A549 (cell line): ENCODE measurements at regions of chr1 and their contacts with region 1.

Region 1: GRCh38 chr1:205430696-205431305 is 8.9 kb upstream of the LEMD1 start:
- DNase-seq: peak; percentile 44 to 60
- ATAC-seq: peak; percentile 79 to 88
- H3K4me3 ChIP-seq: peak overlapping the region; percentile 48
- H3K27ac ChIP-seq: peak overlapping the region; percentile 72 to 80
- H3K4me1 ChIP-seq: 0 out of 3 replicates have a peak, but pooled peaks cover 2% of the 10 kb centered on the region
- CTCF ChIP-seq: peak; percentile 99
- EP300 ChIP-seq: no peak
- POLR2A ChIP-seq: no peak
- RAD21 ChIP-seq: peak; percentile 79 to 88

Region 2: GRCh38 chr1:205032508-205032907 is 398.3 kb before region 1 on chr1:
- CTCF ChIA-PET with region 1: no interaction called
- POLR2A ChIA-PET with region 1: no interaction called
- DNase-seq: no peak
- ATAC-seq: no peak
- H3K4me3 ChIP-seq: no peak overlapping the region
- H3K27ac ChIP-seq: no peak overlapping the region
- H3K4me1 ChIP-seq: no peaks in the 10 kb centered on the region
- CTCF ChIP-seq: no peak
- EP300 ChIP-seq: no peak
- POLR2A ChIP-seq: no peak
- RAD21 ChIP-seq: no peak

Region 3: GRCh38 chr1:205321164-205321958 is 109.4 kb before region 1 on chr1 and contains the start of gene NUAK2:
- CTCF ChIA-PET with region 1: interaction called, 26 read pairs
- POLR2A ChIA-PET with region 1: no interaction called
- DNase-seq: peak; percentile 92 to 95
- ATAC-seq: peak; percentile 70 to 85
- H3K4me3 ChIP-seq: peak within 1 kb of the TSS; percentile 95
- H3K27ac ChIP-seq: peak within 1 kb of the TSS; percentile 96 to 99
- H3K4me1 ChIP-seq: peaks cover 41% of the 10 kb centered on the region
- CTCF ChIP-seq: no peak; the same call in 2 of the 3 replicates
- EP300 ChIP-seq: no peak
- POLR2A ChIP-seq: peak; percentile 99
- RAD21 ChIP-seq: peak; percentile 6 to 9; a peak in 2 of 5 replicates
- polyA plus RNA-seq, gene NUAK2: 22.6 and 29.7 TPM in 2 replicates

Region 4: GRCh38 chr1:205344066-205344928 is 86.5 kb before region 1 on chr1:
- CTCF ChIA-PET with region 1: interaction called, 34 read pairs
- POLR2A ChIA-PET with region 1: no interaction called
- DNase-seq: no peak
- ATAC-seq: peak; percentile 41 to 65
- H3K4me3 ChIP-seq: peak overlapping the region; percentile 66
- H3K27ac ChIP-seq: peak overlapping the region; percentile 64 to 86; a peak in 5 of 6 replicates
- H3K4me1 ChIP-seq: peaks cover 14% of the 10 kb centered on the region; the same call in 2 of the 3 replicates
- CTCF ChIP-seq: no peak
- EP300 ChIP-seq: no peak
- POLR2A ChIP-seq: no peak
- RAD21 ChIP-seq: no peak

Region 5: GRCh38 chr1:205396967-205397616 is 33.7 kb before region 1 on chr1:
- CTCF ChIA-PET with region 1: interaction called, 12 read pairs
- POLR2A ChIA-PET with region 1: no interaction called
- DNase-seq: peak; percentile 61 to 67
- ATAC-seq: peak; percentile 68 to 85; a peak in 5 of 6 replicates
- H3K4me3 ChIP-seq: no peak overlapping the region
- H3K27ac ChIP-seq: no peak overlapping the region
- H3K4me1 ChIP-seq: no peaks in the 10 kb centered on the region
- CTCF ChIP-seq: peak; percentile 71
- EP300 ChIP-seq: no peak
- POLR2A ChIP-seq: no peak
- RAD21 ChIP-seq: peak; percentile 81 to 89

Region 6: DNA sequence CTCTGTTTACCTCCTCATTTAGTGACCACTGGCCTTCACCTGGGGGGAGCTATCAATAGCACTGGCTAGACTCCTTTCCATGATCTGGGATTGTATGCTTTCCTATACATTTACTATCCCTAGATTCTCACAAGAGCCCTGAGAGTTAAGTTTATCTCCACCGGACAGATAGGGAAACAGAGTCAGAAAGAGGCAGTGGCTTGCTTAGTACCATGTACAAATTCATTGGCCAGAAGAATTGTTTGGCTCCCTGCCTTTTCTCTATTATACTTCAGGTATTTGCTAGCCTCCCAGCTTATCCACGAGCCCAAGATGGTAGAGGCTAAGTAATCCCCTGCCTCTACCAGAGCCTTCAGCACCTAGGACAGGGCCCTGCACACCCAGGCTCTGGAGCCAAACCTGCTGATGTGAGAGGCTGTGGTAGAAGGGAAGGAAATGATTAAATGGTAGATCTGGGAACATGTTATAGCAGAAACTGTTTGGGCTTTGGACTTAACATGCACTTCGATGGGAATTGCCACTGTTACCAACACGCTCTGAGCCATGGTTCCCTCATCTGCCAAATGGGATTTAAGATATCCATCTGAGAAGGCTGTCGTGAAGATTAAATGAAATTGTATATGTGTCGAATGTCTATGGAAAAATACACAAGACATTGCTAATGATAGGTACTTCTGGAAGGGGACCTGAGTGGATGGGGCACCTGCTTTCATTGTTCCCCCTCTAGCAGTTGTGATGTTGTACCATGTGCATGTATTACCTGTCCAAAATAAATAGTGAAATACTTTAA is 28.2 kb after region 1 on chr1:
- CTCF ChIA-PET with region 1: interaction called, 22 read pairs
- POLR2A ChIA-PET with region 1: no interaction called
- DNase-seq: peak in 1 of 2 experiments; percentile 43
- ATAC-seq: peak; percentile 60 to 68; a peak in 5 of 6 replicates
- H3K4me3 ChIP-seq: no peak overlapping the region
- H3K27ac ChIP-seq: no peak overlapping the region
- H3K4me1 ChIP-seq: peaks cover 15% of the 10 kb centered on the region
- CTCF ChIP-seq: no peak
- EP300 ChIP-seq: no peak
- POLR2A ChIP-seq: no peak
- RAD21 ChIP-seq: no peak

Region 7: DNA sequence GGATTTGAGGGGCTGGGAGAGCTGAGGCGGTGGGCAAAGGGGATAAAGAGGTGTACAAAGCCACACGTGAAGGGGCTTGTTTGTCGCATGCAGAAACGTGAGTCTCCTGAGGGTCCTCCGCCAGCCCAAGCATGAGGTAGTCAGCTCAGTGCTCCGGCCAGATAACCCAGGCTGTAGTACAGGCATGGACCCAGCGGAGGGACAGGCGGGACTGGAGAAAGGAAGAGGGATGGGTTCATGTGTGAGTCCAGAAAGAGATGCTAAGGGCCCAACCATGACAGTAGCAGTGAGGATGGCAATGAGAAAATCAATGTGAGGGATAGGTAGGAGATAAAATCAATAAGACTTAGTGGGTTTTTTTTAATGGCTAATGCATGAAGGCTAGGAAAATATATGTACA is 214.7 kb after region 1 on chr1:
- CTCF ChIA-PET with region 1: no interaction called
- POLR2A ChIA-PET with region 1: no interaction called
- DNase-seq: no peak
- ATAC-seq: peak; percentile 44 to 47; a peak in 1 of 6 replicates
- H3K4me3 ChIP-seq: no peak overlapping the region
- H3K27ac ChIP-seq: no peak overlapping the region
- H3K4me1 ChIP-seq: no peaks in the 10 kb centered on the region
- CTCF ChIP-seq: no peak
- EP300 ChIP-seq: no peak
- POLR2A ChIP-seq: no peak
- RAD21 ChIP-seq: no peak